ENCODE measurements at regions of chr2 and their contacts with region 1.

Region 1: GRCh38 chr2:162297925-162298552 is 20.4 kb downstream of the IFIH1 start:
- DNase-seq: peak in 1 of 3 donors; percentile 11
- ATAC-seq: peak in 1 of 2 donors; percentile 48
- H3K4me3 ChIP-seq: no peak overlapping the region
- H3K27ac ChIP-seq: no peak overlapping the region
- H3K4me1 ChIP-seq: no peaks in the 10 kb centered on the region
- H3K27me3 ChIP-seq: no peaks in the 10 kb centered on the region

Region 2: DNA sequence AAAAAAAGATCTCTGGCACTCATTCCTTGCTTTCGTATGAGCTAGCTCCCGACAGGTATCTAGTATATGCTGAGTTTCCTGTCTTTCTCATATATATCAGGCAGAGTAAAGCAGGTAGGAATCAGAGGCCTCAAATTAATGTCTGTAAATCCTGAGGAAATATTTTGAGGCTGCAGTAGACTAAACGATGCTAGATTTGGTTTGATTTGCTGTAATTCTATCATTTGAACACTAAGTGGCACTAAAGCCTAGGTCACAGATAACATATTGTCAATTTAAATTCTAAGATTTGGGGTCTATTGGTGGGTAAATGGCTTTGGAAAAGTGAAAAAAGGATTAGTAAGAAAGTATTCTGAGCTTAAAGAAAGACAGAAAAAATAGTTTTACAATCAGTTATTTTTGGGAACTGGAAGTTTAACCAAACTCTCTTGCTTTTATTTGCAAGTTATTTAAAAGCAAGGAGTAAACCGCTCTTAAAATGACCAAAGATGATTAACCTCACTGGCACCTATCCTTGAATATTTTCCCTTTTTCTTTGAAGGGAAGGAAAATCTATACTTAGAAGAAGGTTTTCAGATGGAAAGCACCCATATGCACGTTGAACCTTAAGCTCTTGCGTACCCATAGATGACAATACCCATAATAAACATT is 711.4 kb before region 1 on chr2:
- intact Hi-C with region 1: loop called in 1 of 4 experiments (anchors 10 kb)
- DNase-seq: no peak
- ATAC-seq: no peak
- H3K4me3 ChIP-seq: no peak overlapping the region
- H3K27ac ChIP-seq: no peak overlapping the region
- H3K4me1 ChIP-seq: no peaks in the 10 kb centered on the region
- H3K27me3 ChIP-seq: no peaks in the 10 kb centered on the region

Region 3: DNA sequence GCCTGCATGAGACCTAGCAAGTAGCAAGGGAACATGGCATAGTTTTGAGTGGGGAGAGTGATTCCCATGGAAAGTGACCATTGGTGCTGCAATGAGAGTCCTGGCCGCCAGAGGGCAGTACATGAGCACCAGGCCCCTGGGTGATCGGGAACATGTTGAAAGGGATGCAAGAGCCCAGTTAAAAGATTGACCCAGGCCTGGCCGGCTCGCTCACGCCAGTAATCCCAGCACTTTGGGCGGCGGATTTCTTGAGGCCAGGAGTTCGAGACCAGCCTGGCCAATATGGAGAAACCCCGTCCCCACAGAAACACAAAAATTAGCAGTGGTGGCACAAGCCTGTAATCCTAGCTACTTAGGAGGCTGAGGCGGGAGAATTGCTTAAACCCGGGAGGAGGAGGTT is 77.0 kb before region 1 on chr2:
- intact Hi-C with region 1: loop called in 3 of 4 experiments (anchors 5 to 10 kb)
- DNase-seq: peak; percentile 58 to 83 (median 79)
- ATAC-seq: peak; percentile 67 to 78
- H3K4me3 ChIP-seq: no peak overlapping the region
- H3K27ac ChIP-seq: no peak overlapping the region
- H3K4me1 ChIP-seq: no peaks in the 10 kb centered on the region
- H3K27me3 ChIP-seq: no peaks in the 10 kb centered on the region